Gastrocnemius medialis (tissue), 4 donors: ENCODE measurements at regions of chr20 and their contacts with region 1.

Region 1: DNA sequence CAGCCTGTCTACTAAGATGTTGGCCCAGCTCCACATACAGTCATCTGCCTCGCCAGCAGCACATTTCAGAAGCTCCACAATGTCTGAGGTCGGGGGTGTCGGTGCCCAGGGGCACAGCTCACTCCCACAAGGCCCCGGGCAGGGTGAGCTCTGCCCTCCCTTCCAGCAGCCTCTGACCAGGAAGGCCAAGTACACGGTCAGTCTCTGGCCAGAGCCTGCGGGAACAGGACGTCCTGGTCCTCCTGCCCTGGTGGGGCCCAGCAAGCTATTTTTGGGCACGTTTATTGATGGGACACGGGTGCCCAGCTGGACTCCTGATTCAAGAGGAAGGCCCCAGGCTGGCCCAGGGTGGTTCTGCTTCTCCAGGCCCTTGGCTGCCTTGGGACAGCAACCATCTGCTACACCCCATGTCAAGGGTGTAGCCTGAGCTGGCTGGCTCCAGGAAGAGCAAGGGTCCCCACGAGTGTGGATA is 114.9 kb upstream of the PTPN1 start:
- DNase-seq: peak; percentile 97 to 99
- ATAC-seq: peak; percentile 32 to 42
- H3K4me3 ChIP-seq: no peak overlapping the region
- H3K27ac ChIP-seq: peak overlapping the region; percentile 93 to 100 (median 96)
- H3K4me1 ChIP-seq: peaks cover 59 to 66% of the 10 kb centered on the region in 2 donors
- H3K27me3 ChIP-seq: no peaks in the 10 kb centered on the region
- CTCF ChIP-seq: peak in 1 of 5 experiments; percentile 20
- POLR2A ChIP-seq: peak; percentile 81 to 90

Region 2: GRCh38 chr20:50189681-50190582 is 205.4 kb before region 1 on chr20:
- in situ Hi-C with region 1: no loop called
- intact Hi-C with region 1: loop called (anchors 1 kb)
- DNase-seq: peak; percentile 86 to 87
- ATAC-seq: peak; percentile 45 to 48
- H3K4me3 ChIP-seq: peak overlapping the region; percentile 86 to 96 (median 90)
- H3K27ac ChIP-seq: peak overlapping the region; percentile 91 to 100 (median 97)
- H3K4me1 ChIP-seq: peaks cover 5 to 20% of the 10 kb centered on the region in 2 donors
- H3K27me3 ChIP-seq: no peaks in the 10 kb centered on the region
- CTCF ChIP-seq: peak; percentile 70 to 94 (median 89)
- POLR2A ChIP-seq: no peak

Region 3: GRCh38 chr20:50292324-50293243 is 102.7 kb before region 1 on chr20:
- in situ Hi-C with region 1: loop called in 1 of 4 experiments (anchors 25 kb)
- intact Hi-C with region 1: loop called (anchors 5 kb)
- DNase-seq: peak; percentile 89 to 92
- ATAC-seq: peak; percentile 76 to 84
- H3K4me3 ChIP-seq: no peak overlapping the region
- H3K27ac ChIP-seq: peak overlapping the region; percentile 83 to 95 (median 85)
- H3K4me1 ChIP-seq: peaks cover 19 to 21% of the 10 kb centered on the region in 2 donors
- H3K27me3 ChIP-seq: no peaks in the 10 kb centered on the region
- CTCF ChIP-seq: no peak
- POLR2A ChIP-seq: peak; percentile 32

Region 4: DNA sequence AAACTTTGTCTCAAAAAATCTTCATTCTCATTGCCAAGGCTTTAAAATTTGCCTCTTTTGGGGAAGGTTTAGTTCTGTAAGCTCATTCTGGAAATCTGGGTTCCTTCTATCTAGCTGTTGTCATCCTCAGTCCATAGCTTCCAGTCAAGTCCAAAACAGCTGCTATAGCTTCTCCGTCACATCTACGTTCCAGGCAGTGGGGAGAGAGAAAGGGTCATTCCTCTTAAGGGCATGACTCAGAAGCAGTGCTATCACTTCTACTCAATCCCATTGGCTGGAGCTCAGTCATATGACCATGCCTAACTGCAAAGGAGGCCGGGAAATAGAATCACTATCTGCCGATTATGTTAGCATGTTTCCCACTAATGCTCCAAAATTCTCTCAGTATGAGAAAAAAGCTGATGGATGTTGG is 26.5 kb before region 1 on chr20:
- in situ Hi-C with region 1: no loop called
- intact Hi-C with region 1: no loop called
- DNase-seq: no peak
- ATAC-seq: no peak
- H3K4me3 ChIP-seq: no peak overlapping the region
- H3K27ac ChIP-seq: no peak overlapping the region
- H3K4me1 ChIP-seq: peaks cover 0 to 3% of the 10 kb centered on the region in 2 donors
- H3K27me3 ChIP-seq: no peaks in the 10 kb centered on the region
- CTCF ChIP-seq: no peak
- POLR2A ChIP-seq: no peak

Region 5: GRCh38 chr20:50379049-50379990 is 16.0 kb before region 1 on chr20:
- in situ Hi-C with region 1: no loop called
- intact Hi-C with region 1: loop called (anchors 1 kb)
- DNase-seq: peak; percentile 97 to 99
- ATAC-seq: peak; percentile 89
- H3K4me3 ChIP-seq: peak overlapping the region; percentile 26 to 50 (median 40)
- H3K27ac ChIP-seq: peak overlapping the region; percentile 89 to 93 (median 92)
- H3K4me1 ChIP-seq: peaks cover 30 to 42% of the 10 kb centered on the region in 2 donors
- H3K27me3 ChIP-seq: no peaks in the 10 kb centered on the region
- CTCF ChIP-seq: no peak
- POLR2A ChIP-seq: peak; percentile 96 to 98

Region 6: GRCh38 chr20:50421356-50422277 is 26.3 kb after region 1 on chr20:
- in situ Hi-C with region 1: no loop called
- intact Hi-C with region 1: loop called (anchors 2 kb)
- DNase-seq: no peak
- ATAC-seq: no peak
- H3K4me3 ChIP-seq: no peak overlapping the region
- H3K27ac ChIP-seq: peak overlapping the region; percentile 67 to 99 (median 86)
- H3K4me1 ChIP-seq: peaks cover 32 to 37% of the 10 kb centered on the region in 2 donors
- H3K27me3 ChIP-seq: no peaks in the 10 kb centered on the region
- CTCF ChIP-seq: no peak
- POLR2A ChIP-seq: no peak

Region 7: DNA sequence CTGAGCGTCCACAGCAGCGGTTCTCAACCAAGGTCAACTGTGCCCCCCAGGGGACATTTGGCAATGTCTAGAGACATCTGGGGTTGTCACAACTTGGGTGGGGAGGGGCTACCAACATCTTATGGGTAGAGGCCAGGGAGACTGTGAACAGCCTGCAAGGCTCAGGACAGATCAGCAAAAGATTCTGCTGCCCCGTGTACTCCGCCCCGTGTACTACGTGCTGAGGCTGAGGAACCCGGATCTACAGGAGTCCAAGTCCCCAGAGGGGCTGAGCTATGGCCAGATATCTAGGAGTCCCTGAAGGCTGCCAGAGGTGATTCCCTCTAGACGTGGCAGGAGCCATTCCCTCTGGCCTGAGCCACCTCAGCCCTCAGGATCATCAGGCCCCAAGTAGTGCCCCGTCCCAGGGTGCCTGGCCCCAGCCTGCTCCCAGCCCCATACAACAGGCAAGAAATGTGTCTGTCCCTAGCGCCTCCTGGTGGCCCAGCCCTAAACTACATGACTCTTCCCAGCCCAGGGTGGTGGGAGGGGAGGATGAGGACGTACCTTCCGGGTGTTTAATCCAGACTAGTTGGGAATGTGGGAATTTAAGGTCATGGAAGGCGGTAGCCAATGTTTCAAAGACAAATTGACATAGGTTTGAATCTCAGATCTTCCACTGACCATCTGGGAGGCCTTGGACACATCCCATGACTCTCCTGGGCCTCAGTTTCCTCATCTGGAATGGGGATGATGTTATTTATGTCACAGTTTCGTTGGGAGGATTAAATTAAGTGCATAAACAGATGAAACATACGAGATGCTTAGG is 65.4 kb after region 1 on chr20:
- in situ Hi-C with region 1: loop called in 3 of 4 experiments (anchors 5 kb)
- intact Hi-C with region 1: loop called (anchors 1 kb)
- DNase-seq: peak; percentile 80 to 90
- ATAC-seq: peak; percentile 80 to 82
- H3K4me3 ChIP-seq: no peak overlapping the region
- H3K27ac ChIP-seq: peak overlapping the region; percentile 68 to 80 (median 78)
- H3K4me1 ChIP-seq: peaks cover 18 to 21% of the 10 kb centered on the region in 2 donors
- H3K27me3 ChIP-seq: no peaks in the 10 kb centered on the region
- CTCF ChIP-seq: peak; percentile 91 to 99 (median 95)
- POLR2A ChIP-seq: no peak